H1 (cell line): ENCODE measurements at regions of chr11 and their contacts with region 1.

Region 1: GRCh38 chr11:46238967-46239800 is 38.3 kb upstream of the CREB3L1 start:
- DNase-seq: peak; percentile 83 to 97
- H3K4me3 ChIP-seq: peak overlapping the region; percentile 45 to 62 (median 56); a peak in 7 of 8 replicates
- H3K27ac ChIP-seq: no peak overlapping the region
- H3K4me1 ChIP-seq: peaks cover 4 to 25% (median 14%) of the 10 kb centered on the region in 4 experiments
- H3K27me3 ChIP-seq: peaks cover 4 to 13% (median 10%) of the 10 kb centered on the region in 4 experiments; a peak in 6 of 7 replicates
- CTCF ChIP-seq: peak; percentile 89 to 98 (median 96)
- EP300 ChIP-seq: peak in 1 of 2 experiments; percentile 30; a peak in 1 of 3 replicates
- POLR2A ChIP-seq: peak in 1 of 2 experiments; percentile 48; a peak in 1 of 3 replicates
- RAD21 ChIP-seq: peak; percentile 85 to 90

Region 2: DNA sequence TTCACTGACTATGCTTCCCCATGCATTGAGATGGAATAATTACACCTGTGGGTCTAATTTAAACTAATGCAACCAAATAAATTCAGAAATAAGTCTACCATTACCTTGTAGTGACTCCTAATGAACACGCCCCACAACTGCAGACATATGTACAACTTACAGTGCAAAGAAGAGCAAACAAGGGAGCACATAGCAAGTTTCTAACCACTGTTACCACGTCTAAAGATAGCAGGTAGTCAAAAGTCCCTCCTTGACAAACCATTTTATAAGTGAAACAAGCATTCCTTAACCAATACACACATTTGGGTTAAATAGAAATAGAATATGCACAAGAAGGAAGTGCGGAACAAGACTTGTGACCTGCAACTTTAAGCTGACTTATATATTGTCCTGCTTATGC is 138.5 kb before region 1 on chr11:
- CTCF ChIA-PET with region 1: no interaction called
- POLR2A ChIA-PET with region 1: no interaction called
- DNase-seq: no peak
- H3K4me3 ChIP-seq: no peak overlapping the region
- H3K27ac ChIP-seq: no peak overlapping the region
- H3K4me1 ChIP-seq: peaks cover 0 to 4% (median 2%) of the 10 kb centered on the region in 4 experiments; a peak in 4 of 7 replicates
- H3K27me3 ChIP-seq: no peaks in the 10 kb centered on the region
- CTCF ChIP-seq: no peak
- EP300 ChIP-seq: no peak
- POLR2A ChIP-seq: no peak
- RAD21 ChIP-seq: no peak

Region 3: GRCh38 chr11:46272816-46273427 is 33.7 kb after region 1 on chr11:
- CTCF ChIA-PET with region 1: interaction called, 43 read pairs
- POLR2A ChIA-PET with region 1: interaction called, 28 read pairs
- DNase-seq: no peak
- H3K4me3 ChIP-seq: no peak overlapping the region
- H3K27ac ChIP-seq: no peak overlapping the region
- H3K4me1 ChIP-seq: peaks cover 2 to 14% (median 6%) of the 10 kb centered on the region in 4 experiments; a peak in 4 of 7 replicates
- H3K27me3 ChIP-seq: peaks cover 0 to 4% (median 4%) of the 10 kb centered on the region in 4 experiments; a peak in 2 of 7 replicates
- CTCF ChIP-seq: no peak
- EP300 ChIP-seq: no peak
- POLR2A ChIP-seq: no peak
- RAD21 ChIP-seq: no peak

Region 4: DNA sequence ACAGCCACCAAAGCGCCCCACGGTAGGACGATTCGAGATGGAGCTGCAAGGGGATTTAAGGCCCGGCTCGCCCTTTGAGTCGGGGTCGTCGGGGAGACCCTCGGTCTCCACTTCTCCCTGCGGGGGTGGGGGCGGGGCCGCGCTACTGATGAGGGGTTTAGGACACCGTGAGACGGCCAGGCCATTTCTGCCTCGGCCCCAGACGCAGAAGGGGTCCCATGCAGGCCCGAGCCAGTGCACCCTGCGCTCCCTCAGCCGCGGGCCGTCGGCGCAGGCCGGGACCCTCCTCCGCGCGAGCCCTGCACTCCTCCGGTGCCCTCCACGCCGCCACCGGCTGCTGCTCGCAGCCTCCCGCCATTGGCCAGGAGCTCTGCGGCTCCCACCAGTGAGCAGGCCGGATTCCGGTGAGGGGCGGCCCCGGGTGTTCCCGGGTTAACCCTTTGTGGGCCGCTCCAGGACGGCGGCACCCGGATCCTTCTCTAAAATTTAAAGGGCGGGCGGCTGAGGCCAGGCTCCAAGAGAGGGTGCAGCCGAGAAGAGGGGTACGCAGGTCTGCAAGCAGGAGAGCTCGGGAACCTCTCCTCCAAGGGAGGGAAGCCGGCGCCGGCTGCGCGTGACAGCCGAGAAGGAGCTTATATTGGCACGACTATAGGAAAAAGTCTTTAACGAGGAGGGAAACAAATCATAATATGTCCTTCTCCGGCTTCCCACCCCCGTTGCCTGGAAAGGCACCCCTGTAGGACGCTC is 56.3 kb after region 1 on chr11:
- CTCF ChIA-PET with region 1: interaction called, 858 read pairs
- POLR2A ChIA-PET with region 1: interaction called, 127 read pairs
- DNase-seq: peak; percentile 64 to 92
- H3K4me3 ChIP-seq: peak overlapping the region; percentile 42 to 67 (median 54)
- H3K27ac ChIP-seq: peak overlapping the region; percentile 79
- H3K4me1 ChIP-seq: peaks cover 22 to 49% (median 35%) of the 10 kb centered on the region in 4 experiments
- H3K27me3 ChIP-seq: no peaks in the 10 kb centered on the region
- CTCF ChIP-seq: no peak
- EP300 ChIP-seq: no peak
- POLR2A ChIP-seq: peak; percentile 71 to 89
- RAD21 ChIP-seq: no peak; a peak in 1 of 4 replicates

Region 5: GRCh38 chr11:46332568-46333393 is 93.6 kb after region 1 on chr11:
- CTCF ChIA-PET with region 1: interaction called, 858 read pairs
- POLR2A ChIA-PET with region 1: interaction called, 15 read pairs
- DNase-seq: peak in 1 of 2 experiments; percentile 72
- H3K4me3 ChIP-seq: peak overlapping the region; percentile 44 to 62 (median 55)
- H3K27ac ChIP-seq: no peak overlapping the region
- H3K4me1 ChIP-seq: peaks cover 5 to 46% (median 31%) of the 10 kb centered on the region in 4 experiments
- H3K27me3 ChIP-seq: peaks cover 14 to 44% (median 39%) of the 10 kb centered on the region in 4 experiments
- CTCF ChIP-seq: 0 out of 4 replicates have a peak, but pooled peaks of 1 of the 3 experiments have one; percentile 4
- EP300 ChIP-seq: no peak
- POLR2A ChIP-seq: no peak
- RAD21 ChIP-seq: no peak

Region 6: GRCh38 chr11:46380340-46381047 is 141.3 kb after region 1 on chr11:
- CTCF ChIA-PET with region 1: interaction called, 4 read pairs
- POLR2A ChIA-PET with region 1: interaction called, 17 read pairs
- DNase-seq: peak in 1 of 2 experiments; percentile 92
- H3K4me3 ChIP-seq: peak overlapping the region; percentile 63 to 95 (median 69)
- H3K27ac ChIP-seq: peak overlapping the region; percentile 53
- H3K4me1 ChIP-seq: peaks cover 0 to 16% (median 13%) of the 10 kb centered on the region in 4 experiments; a peak in 6 of 7 replicates
- H3K27me3 ChIP-seq: no peaks in the 10 kb centered on the region
- CTCF ChIP-seq: no peak
- EP300 ChIP-seq: peak in 1 of 2 experiments; percentile 25; a peak in 1 of 3 replicates
- POLR2A ChIP-seq: peak in 1 of 2 experiments; percentile 56; a peak in 2 of 3 replicates
- RAD21 ChIP-seq: no peak